ENCODE measurements at regions of chr12 and their contacts with region 1.

Region 1: DNA sequence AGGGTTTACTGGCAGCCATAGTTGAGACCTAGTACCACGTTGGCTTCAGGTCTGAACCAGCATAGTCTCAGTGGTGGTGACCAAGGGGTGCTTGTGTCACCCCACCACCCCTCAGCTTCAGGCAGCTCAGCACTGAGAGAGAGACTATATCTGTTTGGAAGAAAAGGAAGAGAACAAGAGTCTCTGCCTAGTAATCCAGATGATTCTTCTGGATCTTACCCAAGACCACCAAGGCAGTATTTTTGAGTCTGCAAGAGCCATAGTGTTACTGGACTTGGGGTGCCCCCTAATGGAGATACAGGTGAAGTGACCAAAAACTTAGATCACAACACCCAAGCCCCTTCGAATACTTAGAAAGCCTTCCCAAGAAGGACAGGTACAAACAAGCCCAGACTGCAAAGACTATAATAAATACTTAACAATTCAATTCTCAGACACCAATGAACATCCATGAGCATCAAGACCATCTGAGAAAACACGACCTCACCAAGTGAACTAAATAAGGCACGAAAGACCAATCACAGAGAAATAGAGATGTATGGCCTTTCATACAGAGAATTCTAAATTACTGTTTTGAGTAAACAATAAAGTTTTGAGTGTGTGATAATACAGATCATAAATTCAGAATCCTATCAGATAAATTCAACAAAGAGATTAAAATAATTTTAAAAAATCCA is 107.0 kb downstream of the HELB start:
- DNase-seq: peak; percentile 80
- ATAC-seq: peak; percentile 85
- H3K4me3 ChIP-seq: no peak overlapping the region
- H3K27ac ChIP-seq: no peak overlapping the region
- H3K4me1 ChIP-seq: peaks cover 8% of the 10 kb centered on the region
- H3K27me3 ChIP-seq: no peaks in the 10 kb centered on the region; the same call in none of the 2 replicates
- CTCF ChIP-seq: peak; percentile 81
- POLR2A ChIP-seq: no peak
- RAD21 ChIP-seq: peak; percentile 92

Region 2: GRCh38 chr12:65278576-65279368 is 1130.6 kb before region 1 on chr12 and contains the start of gene MSRB3:
- CTCF ChIA-PET with region 1: no interaction called
- POLR2A ChIA-PET with region 1: no interaction called
- dilution Hi-C with region 1: no loop called
- in situ Hi-C with region 1: loop called (anchors 25 kb)
- intact Hi-C with region 1: no loop called
- DNase-seq: peak; percentile 70
- ATAC-seq: peak; percentile 90
- H3K4me3 ChIP-seq: peak within 1 kb of the TSS; percentile 99
- H3K27ac ChIP-seq: peak within 1 kb of the TSS; percentile 100
- H3K4me1 ChIP-seq: peaks cover 7% of the 10 kb centered on the region
- H3K27me3 ChIP-seq: no peaks in the 10 kb centered on the region
- CTCF ChIP-seq: no peak
- POLR2A ChIP-seq: no peak; the same call in 1 of the 2 replicates
- RAD21 ChIP-seq: no peak
- total RNA-seq, gene MSRB3: 31.7 and 40.8 TPM in 2 replicates

Region 3: DNA sequence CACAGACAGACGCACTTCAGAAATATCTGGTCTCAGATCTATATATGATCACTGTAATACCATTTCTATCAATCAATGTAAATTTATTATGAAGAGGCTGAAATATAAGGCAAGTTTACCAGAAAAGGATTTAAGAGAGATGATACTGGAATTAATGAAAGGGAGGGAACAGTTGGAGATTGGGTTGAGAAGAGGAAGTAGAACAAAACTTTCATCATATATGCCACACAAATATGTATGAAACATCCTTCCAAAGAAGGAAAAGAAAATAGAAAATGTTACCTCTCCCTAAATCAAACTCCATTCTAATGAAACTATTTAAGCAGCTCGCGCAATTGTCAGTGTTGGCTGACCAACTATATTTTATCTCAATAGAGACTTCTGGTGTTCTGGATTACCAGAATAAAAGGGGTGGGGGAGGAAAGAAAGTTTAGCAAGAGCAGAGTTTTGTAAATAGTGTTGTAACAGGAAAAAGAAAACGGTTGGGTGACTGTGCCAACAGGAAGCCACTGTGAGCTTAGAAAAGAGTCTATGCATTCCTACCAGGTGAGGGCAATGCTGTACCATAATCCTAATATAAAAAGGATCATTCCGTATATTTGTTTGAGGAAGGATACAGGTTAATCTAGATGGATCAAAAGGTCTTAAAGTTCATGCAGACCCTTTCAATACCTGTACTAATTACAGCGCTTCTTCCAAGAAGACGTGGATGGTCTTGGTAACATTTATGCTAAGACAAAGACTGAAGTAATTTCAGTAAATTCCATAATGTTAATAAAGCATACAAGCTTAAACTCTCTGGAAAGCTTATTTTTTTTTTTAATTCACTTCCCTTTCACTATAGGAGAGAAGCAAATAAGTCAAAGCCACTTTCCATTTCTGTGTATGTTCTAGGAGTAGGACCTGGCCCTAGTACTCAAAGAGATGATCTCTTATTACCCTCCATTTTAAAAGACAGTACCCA is 264.3 kb before region 1 on chr12:
- CTCF ChIA-PET with region 1: no interaction called
- POLR2A ChIA-PET with region 1: no interaction called
- dilution Hi-C with region 1: no loop called
- in situ Hi-C with region 1: loop called (anchors 25 kb)
- intact Hi-C with region 1: loop called (anchors 5 kb)
- DNase-seq: peak; percentile 75
- ATAC-seq: peak; percentile 75
- H3K4me3 ChIP-seq: no peak overlapping the region
- H3K27ac ChIP-seq: no peak overlapping the region
- H3K4me1 ChIP-seq: no peaks in the 10 kb centered on the region
- H3K27me3 ChIP-seq: no peaks in the 10 kb centered on the region
- CTCF ChIP-seq: peak; percentile 70
- POLR2A ChIP-seq: no peak
- RAD21 ChIP-seq: peak; percentile 61

Region 4: GRCh38 chr12:66269757-66270383 is 139.5 kb before region 1 on chr12:
- CTCF ChIA-PET with region 1: interaction called, 13 read pairs
- POLR2A ChIA-PET with region 1: no interaction called
- dilution Hi-C with region 1: no loop called
- in situ Hi-C with region 1: loop called (anchors 10 kb)
- intact Hi-C with region 1: loop called (anchors 1 kb)
- DNase-seq: peak; percentile 62
- ATAC-seq: peak; percentile 92
- H3K4me3 ChIP-seq: no peak overlapping the region
- H3K27ac ChIP-seq: no peak overlapping the region
- H3K4me1 ChIP-seq: no peaks in the 10 kb centered on the region
- H3K27me3 ChIP-seq: peaks cover 15% of the 10 kb centered on the region
- CTCF ChIP-seq: peak; percentile 75
- POLR2A ChIP-seq: no peak
- RAD21 ChIP-seq: peak; percentile 61

Region 5: DNA sequence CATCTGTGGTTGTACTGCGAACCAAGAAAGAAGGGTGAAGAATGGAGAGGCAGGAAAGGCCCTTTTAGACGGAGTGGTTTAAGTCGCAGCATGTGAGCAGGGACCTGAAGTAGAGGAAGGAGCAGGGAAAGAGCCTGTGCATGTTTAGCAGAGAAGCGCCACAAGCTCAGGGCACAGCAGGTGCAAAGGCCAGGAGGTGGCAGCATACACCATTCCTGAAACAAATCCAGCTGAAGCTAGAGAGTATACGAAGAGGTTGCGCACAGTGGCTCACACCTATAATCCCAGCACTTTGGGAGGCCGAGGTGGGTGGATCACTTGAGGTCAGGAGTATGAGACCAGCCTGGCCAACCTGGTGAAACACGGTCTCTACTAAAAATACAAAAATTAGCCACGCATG is 57.1 kb before region 1 on chr12:
- CTCF ChIA-PET with region 1: interaction called, 7 read pairs
- POLR2A ChIA-PET with region 1: no interaction called
- dilution Hi-C with region 1: no loop called
- in situ Hi-C with region 1: no loop called
- intact Hi-C with region 1: loop called (anchors 1 kb)
- DNase-seq: peak; percentile 34
- ATAC-seq: peak; percentile 57; the same call in 1 of the 2 replicates
- H3K4me3 ChIP-seq: no peak overlapping the region
- H3K27ac ChIP-seq: no peak overlapping the region
- H3K4me1 ChIP-seq: no peaks in the 10 kb centered on the region
- H3K27me3 ChIP-seq: no peaks in the 10 kb centered on the region
- CTCF ChIP-seq: peak; percentile 41
- POLR2A ChIP-seq: no peak
- RAD21 ChIP-seq: peak; percentile 47